ENCODE measurements at regions of chr12 and their contacts with region 1.

Region 1: GRCh38 chr12:93243689-93244513 is 133.8 kb upstream of the NUDT4 start:
- DNase-seq: peak; percentile 76 to 79
- H3K4me3 ChIP-seq: no peak overlapping the region
- H3K27ac ChIP-seq: peak overlapping the region; percentile 76 to 91 (median 85)
- H3K4me1 ChIP-seq: peaks cover 27 to 44% of the 10 kb centered on the region in 2 donors
- H3K27me3 ChIP-seq: no peaks in the 10 kb centered on the region
- CTCF ChIP-seq: no peak
- POLR2A ChIP-seq: peak in 1 of 2 donors; percentile 24

Region 2: GRCh38 chr12:93174048-93174447 is 69.9 kb before region 1 on chr12:
- intact Hi-C with region 1: no loop called
- DNase-seq: no peak
- H3K4me3 ChIP-seq: no peak overlapping the region
- H3K27ac ChIP-seq: no peak overlapping the region
- H3K4me1 ChIP-seq: peaks cover 0 to 12% of the 10 kb centered on the region in 2 donors
- H3K27me3 ChIP-seq: no peaks in the 10 kb centered on the region
- CTCF ChIP-seq: no peak
- POLR2A ChIP-seq: no peak

Region 3: DNA sequence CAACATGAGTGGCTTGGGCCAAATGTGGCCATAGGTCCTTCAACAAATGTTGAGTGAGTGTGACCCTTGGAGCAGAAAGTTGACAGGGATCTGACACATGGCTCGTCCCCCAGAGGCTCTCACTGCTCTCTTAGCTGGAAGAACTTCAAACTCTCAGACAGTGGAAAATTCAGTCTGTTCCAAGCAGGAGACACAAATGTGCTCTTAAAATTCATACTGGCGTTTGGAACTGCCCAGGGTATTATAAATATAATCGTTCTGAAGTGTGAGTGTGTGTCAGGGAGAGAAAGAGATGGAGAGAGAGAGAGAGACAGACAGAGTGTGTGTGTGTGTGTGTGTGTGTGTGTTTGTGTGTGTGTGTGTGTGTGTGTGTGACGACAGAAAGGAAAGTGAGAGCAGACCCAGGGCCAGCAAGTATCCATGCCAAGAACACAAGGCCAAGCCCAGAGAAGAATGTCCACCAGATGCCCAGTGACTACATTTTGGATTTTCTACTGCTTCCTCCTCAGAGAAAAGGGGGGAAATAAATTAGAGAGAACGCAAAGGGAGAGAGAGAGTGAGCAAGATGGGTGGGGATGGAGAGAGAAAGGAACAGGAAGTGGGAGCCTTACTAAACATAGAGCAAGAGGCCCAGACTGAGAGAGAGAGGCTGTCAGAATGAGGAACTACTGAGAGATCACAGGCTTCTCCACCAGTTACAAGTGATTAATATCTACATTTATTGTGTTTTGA is 59.8 kb before region 1 on chr12:
- intact Hi-C with region 1: no loop called
- DNase-seq: peak; percentile 55 to 71
- H3K4me3 ChIP-seq: no peak overlapping the region
- H3K27ac ChIP-seq: peak overlapping the region; percentile 63 to 79 (median 79)
- H3K4me1 ChIP-seq: peaks cover 11 to 19% of the 10 kb centered on the region in 2 donors
- H3K27me3 ChIP-seq: no peaks in the 10 kb centered on the region
- CTCF ChIP-seq: no peak
- POLR2A ChIP-seq: no peak

Region 4: DNA sequence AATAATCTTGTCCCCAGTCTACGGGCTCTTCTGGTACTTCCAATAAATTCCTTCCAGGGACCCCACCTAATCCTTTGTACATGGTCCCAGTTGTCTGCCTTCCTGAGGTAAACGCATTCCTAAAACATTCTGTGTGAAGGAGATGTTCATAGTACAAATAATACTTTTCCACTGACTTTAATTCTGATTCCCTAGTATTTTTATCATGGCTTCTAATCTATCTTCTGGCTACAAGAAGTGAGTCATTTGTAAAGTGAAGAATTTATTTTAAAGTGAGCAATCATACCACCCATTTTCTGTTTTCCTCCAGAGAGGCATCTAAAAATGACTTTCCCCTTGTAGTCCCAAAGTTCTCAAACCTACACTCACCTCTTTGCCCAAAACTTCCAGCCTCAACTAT is 67.9 kb after region 1 on chr12:
- intact Hi-C with region 1: no loop called
- DNase-seq: no peak
- H3K4me3 ChIP-seq: no peak overlapping the region
- H3K27ac ChIP-seq: no peak overlapping the region
- H3K4me1 ChIP-seq: no peaks in the 10 kb centered on the region
- H3K27me3 ChIP-seq: no peaks in the 10 kb centered on the region
- CTCF ChIP-seq: no peak
- POLR2A ChIP-seq: no peak

Region 5: GRCh38 chr12:93387780-93388179 is 143.9 kb after region 1 on chr12:
- intact Hi-C with region 1: loop called (anchors 5 kb)
- DNase-seq: no peak
- H3K4me3 ChIP-seq: no peak overlapping the region
- H3K27ac ChIP-seq: no peak overlapping the region
- H3K4me1 ChIP-seq: peaks cover 47 to 57% of the 10 kb centered on the region in 2 donors
- H3K27me3 ChIP-seq: no peaks in the 10 kb centered on the region
- CTCF ChIP-seq: no peak
- POLR2A ChIP-seq: no peak

Region 6: GRCh38 chr12:93668919-93669418 is 425.1 kb after region 1 on chr12:
- intact Hi-C with region 1: no loop called
- DNase-seq: no peak
- H3K4me3 ChIP-seq: no peak overlapping the region
- H3K27ac ChIP-seq: no peak overlapping the region
- H3K4me1 ChIP-seq: no peaks in the 10 kb centered on the region
- H3K27me3 ChIP-seq: no peaks in the 10 kb centered on the region
- CTCF ChIP-seq: no peak
- POLR2A ChIP-seq: no peak

Measured in thyroid gland (tissue), 4 donors.